IMR-90 (cell line): ENCODE measurements at regions of chr4 and their contacts with region 1.

Region 1: DNA sequence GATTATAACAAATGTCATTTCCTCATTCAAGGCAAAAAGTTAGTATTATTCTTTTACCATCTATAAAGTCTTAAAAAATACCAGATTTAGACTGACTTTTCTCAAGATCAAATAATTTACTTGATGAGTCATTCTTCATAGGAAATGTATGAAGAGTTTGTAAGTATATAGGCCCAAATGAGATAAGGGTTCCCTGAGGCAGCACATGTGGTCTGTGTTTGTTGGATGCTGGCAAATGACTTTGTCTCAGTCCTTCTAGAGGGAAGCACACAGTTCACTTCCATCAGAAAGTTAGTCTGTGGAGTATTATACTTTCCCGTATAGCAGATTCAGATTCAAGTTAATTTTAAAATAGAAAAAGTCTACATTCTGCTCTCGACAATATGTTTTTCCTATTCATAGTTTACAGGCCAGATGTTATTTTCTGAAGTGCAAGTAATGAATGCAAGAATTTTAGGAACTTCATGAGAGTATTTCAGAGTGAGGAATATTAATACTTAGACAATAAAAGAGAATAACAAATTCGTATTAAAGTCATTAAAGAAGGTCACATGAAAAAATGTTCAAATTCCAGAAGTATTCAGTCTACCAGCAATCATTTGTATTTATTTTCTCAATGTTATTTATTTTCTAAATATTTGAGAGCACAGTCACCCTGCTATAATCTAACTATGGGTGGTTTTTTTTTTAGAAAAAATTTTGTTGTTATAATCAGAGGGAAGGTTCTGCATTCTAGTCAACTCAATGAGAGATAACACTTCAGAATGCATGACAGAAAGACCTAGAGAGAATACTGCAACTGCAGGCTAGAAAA is 601.8 kb upstream of the ZFP42 start:
- DNase-seq: peak; percentile 66
- ATAC-seq: peak; percentile 84
- H3K4me3 ChIP-seq: no peak overlapping the region
- H3K27ac ChIP-seq: peak overlapping the region; percentile 73; the same call in 1 of the 2 replicates
- H3K4me1 ChIP-seq: peaks cover 6% of the 10 kb centered on the region
- H3K27me3 ChIP-seq: no peaks in the 10 kb centered on the region
- CTCF ChIP-seq: no peak
- POLR2A ChIP-seq: no peak
- RAD21 ChIP-seq: no peak

Region 2: DNA sequence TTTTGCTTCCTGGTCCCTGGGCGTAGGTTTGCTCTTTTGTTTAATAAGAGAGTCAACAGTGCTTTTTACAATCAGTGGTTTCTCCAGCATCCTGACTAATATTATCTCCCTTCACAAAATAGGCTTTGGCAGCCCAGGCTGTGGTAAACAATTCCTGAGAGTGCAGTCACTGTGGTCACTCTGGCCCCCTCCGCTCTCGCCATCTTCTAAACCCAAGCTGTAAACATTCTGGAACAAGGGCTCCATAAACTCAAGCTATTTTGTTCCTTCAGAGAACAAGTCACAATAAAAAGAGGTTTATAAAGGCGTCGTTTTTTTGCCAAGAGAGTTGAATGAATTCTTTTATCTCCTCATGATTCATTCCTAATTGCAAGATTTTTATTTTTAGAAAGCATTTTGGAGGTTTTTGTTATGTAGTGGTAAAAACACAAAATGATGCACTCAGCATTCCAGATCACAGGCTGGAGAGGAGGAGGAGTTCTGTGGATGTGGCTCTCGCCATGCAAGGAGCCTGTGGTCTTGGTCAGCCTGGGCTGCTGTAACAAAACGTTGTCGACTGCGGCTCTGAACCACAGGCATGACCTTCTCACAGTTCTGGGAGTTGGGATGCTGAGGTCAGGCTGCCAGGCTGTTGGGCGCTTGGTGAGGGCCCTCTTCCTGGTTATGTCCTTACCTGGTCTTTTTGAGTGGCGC is 183.7 kb before region 1 on chr4:
- CTCF ChIA-PET with region 1: no interaction called
- POLR2A ChIA-PET with region 1: no interaction called
- dilution Hi-C with region 1: no loop called
- in situ Hi-C with region 1: no loop called
- intact Hi-C with region 1: loop called (anchors 10 kb)
- DNase-seq: peak; percentile 88
- ATAC-seq: peak; percentile 95
- H3K4me3 ChIP-seq: no peak overlapping the region
- H3K27ac ChIP-seq: peak overlapping the region; percentile 57; the same call in 1 of the 2 replicates
- H3K4me1 ChIP-seq: peaks cover 3% of the 10 kb centered on the region
- H3K27me3 ChIP-seq: no peaks in the 10 kb centered on the region
- CTCF ChIP-seq: no peak
- POLR2A ChIP-seq: no peak
- RAD21 ChIP-seq: no peak